Heart right ventricle (tissue), 16 donors: ENCODE measurements at regions of chr21 and their contacts with region 1.

Region 1: GRCh38 chr21:37563641-37564340 is 197.2 kb downstream of the DYRK1A start:
- DNase-seq: peak; percentile 93
- ATAC-seq: peak; percentile 94 to 98 (median 97)
- H3K4me3 ChIP-seq: peak overlapping the region; percentile 58 to 92 (median 70)
- H3K27ac ChIP-seq: peak overlapping the region; percentile 55 to 98 (median 94)
- H3K4me1 ChIP-seq: peaks cover 0 to 40% (median 26%) of the 10 kb centered on the region in 9 donors
- H3K27me3 ChIP-seq: no peaks in the 10 kb centered on the region
- CTCF ChIP-seq: peak in 7 of 9 donors; percentile 34 to 69 (median 46)

Region 2: GRCh38 chr21:37496972-37497371 is 66.8 kb before region 1 on chr21:
- intact Hi-C with region 1: loop called in 1 of 10 experiments (anchors 10 kb)
- DNase-seq: no peak
- ATAC-seq: no peak
- H3K4me3 ChIP-seq: no peak overlapping the region
- H3K27ac ChIP-seq: no peak overlapping the region
- H3K4me1 ChIP-seq: peaks cover 0 to 9% (median 0%) of the 10 kb centered on the region in 9 donors
- H3K27me3 ChIP-seq: no peaks in the 10 kb centered on the region
- CTCF ChIP-seq: peak in 6 of 9 donors; percentile 26 to 53 (median 33)